ENCODE measurements at regions of chr19 and their contacts with region 1.

Region 1: DNA sequence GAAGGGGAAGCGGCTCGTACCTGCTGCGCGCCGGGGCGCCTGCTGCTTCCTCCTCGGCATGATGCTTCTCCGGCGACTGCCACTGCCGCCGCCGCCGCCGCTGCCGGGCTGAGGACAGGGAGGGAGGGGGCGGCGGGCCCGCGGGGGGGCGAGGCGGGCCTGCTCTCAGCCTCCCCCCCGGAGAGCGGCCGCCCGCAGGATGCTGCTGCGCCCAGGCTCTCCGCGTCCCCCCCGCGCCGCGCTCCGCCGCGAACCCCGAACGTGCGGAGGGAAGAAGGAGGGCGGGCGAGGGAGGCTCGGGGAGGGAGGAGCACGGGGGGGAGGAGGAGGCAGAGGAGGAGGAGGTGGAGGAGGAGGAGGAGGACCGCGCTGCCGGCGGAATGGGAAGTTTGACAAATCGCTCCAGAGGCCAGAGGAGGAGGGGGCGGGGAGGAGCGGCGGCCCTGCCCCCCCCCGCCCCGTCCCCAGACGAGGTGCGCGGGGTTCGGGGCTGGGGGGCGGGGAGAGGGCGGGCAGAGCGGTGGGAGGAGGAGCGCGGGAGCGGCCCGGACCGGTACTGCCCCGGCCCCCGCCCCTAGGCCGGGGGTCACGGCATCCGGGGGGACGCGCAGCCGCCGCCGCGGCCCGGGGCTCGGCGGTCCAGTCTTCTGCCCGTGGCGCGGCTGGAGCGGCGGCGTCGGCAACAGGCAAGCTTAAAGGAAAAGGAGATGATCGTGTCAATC is at the start of gene TSHZ3:
- DNase-seq: peak; percentile 81 to 90 (median 86)
- ATAC-seq: peak; percentile 69 to 86 (median 80)
- H3K4me3 ChIP-seq: peak within 1 kb of the TSS; percentile 75 to 96 (median 86)
- H3K27ac ChIP-seq: peak within 1 kb of the TSS; percentile 79 to 97 (median 93)
- H3K4me1 ChIP-seq: peaks cover 0 to 47% (median 15%) of the 10 kb centered on the region in 12 donors
- H3K27me3 ChIP-seq: peaks cover 0 to 36% (median 17%) of the 10 kb centered on the region in 9 donors
- CTCF ChIP-seq: no peak
- POLR2A ChIP-seq: no peak
- total RNA-seq, gene TSHZ3: 2.0 to 11.5 (median 2.7) TPM

Region 2: DNA sequence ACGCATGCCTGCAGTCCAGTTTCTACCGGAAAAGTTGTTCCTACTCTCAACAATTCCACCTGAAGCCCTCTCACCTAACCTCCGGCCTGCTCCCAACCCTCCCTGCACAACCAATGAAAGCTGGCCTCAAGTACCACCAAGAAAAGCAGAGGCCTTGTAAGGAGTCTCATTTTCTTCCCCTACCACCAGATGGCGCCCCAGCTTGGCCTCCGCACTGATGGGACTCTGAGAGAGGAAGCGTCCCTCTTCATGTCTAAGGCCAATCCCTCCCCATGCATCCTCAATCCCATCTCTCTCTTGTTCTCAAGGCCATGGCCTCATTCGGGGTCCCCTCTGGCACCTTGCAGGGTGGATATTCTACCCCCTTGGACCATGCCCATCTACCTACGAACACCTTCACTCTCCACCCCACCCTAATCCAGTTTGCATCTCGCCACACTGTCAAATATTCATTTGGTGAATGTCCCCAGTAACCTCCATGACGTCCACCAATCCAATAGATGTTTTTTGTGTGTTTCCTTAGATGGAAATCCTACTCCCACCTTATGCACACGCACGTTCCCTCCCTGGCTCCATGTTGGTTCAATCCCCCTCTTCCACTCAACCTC is 564.4 kb before region 1 on chr19:
- intact Hi-C with region 1: loop called in 1 of 10 experiments (anchors 10 kb)
- DNase-seq: peak; percentile 20 to 69 (median 44)
- ATAC-seq: peak in 3 of 4 donors; percentile 49 to 57 (median 54)
- H3K4me3 ChIP-seq: no peak overlapping the region
- H3K27ac ChIP-seq: no peak overlapping the region
- H3K4me1 ChIP-seq: no peaks in the 10 kb centered on the region
- H3K27me3 ChIP-seq: peaks cover 0 to 3% (median 0%) of the 10 kb centered on the region in 9 donors
- CTCF ChIP-seq: peak; percentile 31 to 74 (median 54)
- POLR2A ChIP-seq: no peak

Region 3: DNA sequence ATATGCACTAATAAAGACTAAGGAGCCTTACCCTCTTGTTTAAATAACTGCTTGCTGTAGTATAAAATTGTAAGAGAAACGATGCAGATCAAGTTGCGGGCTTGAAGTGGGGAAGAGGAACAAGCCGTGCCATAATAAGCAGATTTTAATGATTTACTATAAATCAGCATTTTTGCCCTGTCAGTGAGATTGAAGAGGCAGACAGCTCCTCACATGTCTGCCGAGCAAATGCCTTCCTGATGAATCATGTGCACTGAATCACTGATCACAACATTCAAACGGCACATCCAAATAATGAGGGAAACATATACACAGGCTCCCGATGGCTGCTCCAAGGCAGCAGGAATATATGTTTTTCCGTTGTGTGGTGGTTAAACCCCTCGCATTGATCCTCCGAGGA is 282.9 kb before region 1 on chr19:
- intact Hi-C with region 1: loop called in 1 of 10 experiments (anchors 10 kb)
- DNase-seq: no peak
- ATAC-seq: no peak
- H3K4me3 ChIP-seq: no peak overlapping the region
- H3K27ac ChIP-seq: no peak overlapping the region
- H3K4me1 ChIP-seq: no peaks in the 10 kb centered on the region
- H3K27me3 ChIP-seq: peaks cover 0 to 13% (median 0%) of the 10 kb centered on the region in 9 donors
- CTCF ChIP-seq: no peak
- POLR2A ChIP-seq: no peak

Region 4: GRCh38 chr19:31127134-31127967 is 222.0 kb before region 1 on chr19:
- intact Hi-C with region 1: loop called in 1 of 10 experiments (anchors 10 kb)
- DNase-seq: no peak
- ATAC-seq: peak in 1 of 4 donors; percentile 16
- H3K4me3 ChIP-seq: no peak overlapping the region
- H3K27ac ChIP-seq: peak overlapping the region in 1 of 12 donors; percentile 4
- H3K4me1 ChIP-seq: no peaks in the 10 kb centered on the region
- H3K27me3 ChIP-seq: no peaks in the 10 kb centered on the region
- CTCF ChIP-seq: no peak
- POLR2A ChIP-seq: no peak

Region 5: GRCh38 chr19:32405431-32406161 is 1056.3 kb after region 1 on chr19 and contains the start of gene DPY19L3:
- intact Hi-C with region 1: loop called in 1 of 10 experiments (anchors 5 kb)
- DNase-seq: peak; percentile 95 to 97 (median 96)
- ATAC-seq: peak; percentile 99 to 100 (median 99)
- H3K4me3 ChIP-seq: peak within 1 kb of the TSS; percentile 73 to 97 (median 86)
- H3K27ac ChIP-seq: peak within 1 kb of the TSS; percentile 90 to 99 (median 98)
- H3K4me1 ChIP-seq: peaks cover 0 to 26% (median 14%) of the 10 kb centered on the region in 12 donors
- H3K27me3 ChIP-seq: no peaks in the 10 kb centered on the region
- CTCF ChIP-seq: peak in 1 of 12 donors; percentile 20
- POLR2A ChIP-seq: peak in 1 of 2 donors; percentile 93
- total RNA-seq, gene DPY19L3: 3.6 to 15.2 (median 8.7) TPM

Measured in heart left ventricle (tissue), 16 donors.